ENCODE measurements at regions of chr17 and their contacts with region 1.

Region 1: DNA sequence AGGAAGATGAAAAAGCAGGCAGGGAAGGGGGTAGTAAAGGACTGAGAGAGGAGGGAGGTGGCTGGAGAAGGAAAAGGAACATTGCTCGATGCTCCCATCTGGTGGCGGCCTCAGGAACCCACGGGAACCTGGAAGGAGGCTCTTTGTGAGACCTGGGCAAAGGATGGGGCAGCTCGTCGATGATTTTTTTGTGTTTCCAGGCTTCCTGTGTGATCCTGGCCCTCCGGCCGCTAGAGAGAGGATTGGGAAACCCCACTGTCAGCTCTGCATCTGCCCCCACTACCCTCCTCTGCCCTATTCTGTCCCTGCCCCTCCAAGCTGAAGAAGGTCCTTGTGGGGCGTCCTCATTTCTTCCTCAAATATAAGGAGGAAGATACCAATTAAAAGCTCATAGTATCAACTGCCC is 6.6 kb downstream of the WFIKKN2 start:
- DNase-seq: peak; percentile 61
- ATAC-seq: peak; percentile 95
- H3K4me3 ChIP-seq: no peak overlapping the region
- H3K27ac ChIP-seq: no peak overlapping the region
- H3K4me1 ChIP-seq: peaks cover 0 to 22% of the 10 kb centered on the region in 2 experiments; a peak in 2 of 4 replicates
- H3K27me3 ChIP-seq: no peaks in the 10 kb centered on the region
- CTCF ChIP-seq: peak; percentile 94 to 97 (median 97)
- POLR2A ChIP-seq: no peak
- RAD21 ChIP-seq: peak; percentile 96

Region 2: GRCh38 chr17:50707289-50708049 is 134.5 kb before region 1 on chr17 and contains the start of gene ANKRD40:
- CTCF ChIA-PET with region 1: no interaction called
- POLR2A ChIA-PET with region 1: no interaction called
- RAD21 ChIA-PET with region 1: no interaction called
- intact Hi-C with region 1: loop called (anchors 5 kb)
- DNase-seq: peak; percentile 90
- ATAC-seq: peak; percentile 79
- H3K4me3 ChIP-seq: peak within 1 kb of the TSS; percentile 76 to 79
- H3K27ac ChIP-seq: peak within 1 kb of the TSS; percentile 96
- H3K4me1 ChIP-seq: peaks cover 14 to 43% of the 10 kb centered on the region in 2 experiments
- H3K27me3 ChIP-seq: no peaks in the 10 kb centered on the region
- CTCF ChIP-seq: no peak
- POLR2A ChIP-seq: peak; percentile 75
- RAD21 ChIP-seq: peak; percentile 25; the same call in 1 of the 2 replicates
- total RNA-seq, gene ANKRD40: 72.0 TPM

Region 3: GRCh38 chr17:50949989-50950881 is 108.3 kb after region 1 on chr17:
- CTCF ChIA-PET with region 1: interaction called, 12 read pairs
- POLR2A ChIA-PET with region 1: no interaction called
- RAD21 ChIA-PET with region 1: no interaction called
- intact Hi-C with region 1: no loop called
- DNase-seq: peak; percentile 88
- ATAC-seq: peak; percentile 87
- H3K4me3 ChIP-seq: peak overlapping the region; percentile 29 to 42
- H3K27ac ChIP-seq: peak overlapping the region; percentile 79
- H3K4me1 ChIP-seq: peaks cover 74 to 97% of the 10 kb centered on the region in 2 experiments
- H3K27me3 ChIP-seq: no peaks in the 10 kb centered on the region
- CTCF ChIP-seq: peak; percentile 86 to 99 (median 97)
- POLR2A ChIP-seq: no peak
- RAD21 ChIP-seq: peak; percentile 100